Heart right ventricle (tissue), 16 donors: ENCODE measurements at regions of chr12 and their contacts with region 1.

Region 1: GRCh38 chr12:100610666-100611430 is 37.4 kb downstream of the GAS2L3 start:
- DNase-seq: no peak
- ATAC-seq: no peak
- H3K4me3 ChIP-seq: no peak overlapping the region
- H3K27ac ChIP-seq: no peak overlapping the region
- H3K4me1 ChIP-seq: peaks cover 0 to 23% (median 0%) of the 10 kb centered on the region in 9 donors
- H3K27me3 ChIP-seq: no peaks in the 10 kb centered on the region
- CTCF ChIP-seq: no peak

Region 2: DNA sequence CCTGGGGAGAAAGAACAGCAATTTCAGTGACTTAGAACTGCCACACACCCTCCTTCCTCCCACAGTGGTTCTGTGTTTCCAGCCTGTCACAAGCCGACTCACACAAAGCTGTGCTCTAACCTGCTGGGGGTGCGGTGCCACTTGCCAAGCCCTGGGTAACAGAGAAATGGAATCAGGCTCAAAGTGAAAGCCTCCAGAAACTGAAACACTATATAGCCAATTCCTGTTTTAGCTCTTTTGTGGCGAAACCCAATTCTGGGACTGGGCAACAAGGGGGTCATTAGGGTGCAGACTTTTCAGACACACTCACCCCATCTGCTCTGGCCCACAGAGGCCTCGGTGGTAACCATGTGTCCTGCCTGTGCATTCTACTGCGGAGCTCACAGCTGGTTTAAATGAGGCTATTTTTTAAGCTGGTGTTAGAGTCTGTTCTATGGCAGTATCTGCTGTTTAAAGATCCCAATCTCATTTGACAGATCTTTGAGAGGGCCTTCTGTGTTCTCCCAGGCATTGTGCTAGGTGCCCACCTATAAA is 425.4 kb before region 1 on chr12:
- intact Hi-C with region 1: no loop called
- DNase-seq: no peak
- ATAC-seq: peak in 2 of 8 donors; percentile 13 to 27
- H3K4me3 ChIP-seq: peak overlapping the region in 1 of 10 donors; percentile 3
- H3K27ac ChIP-seq: peak overlapping the region in 4 of 10 donors; percentile 16 to 46 (median 34)
- H3K4me1 ChIP-seq: peaks cover 0 to 19% (median 3%) of the 10 kb centered on the region in 9 donors
- H3K27me3 ChIP-seq: no peaks in the 10 kb centered on the region
- CTCF ChIP-seq: no peak

Region 3: GRCh38 chr12:100591975-100592374 is 18.9 kb before region 1 on chr12:
- intact Hi-C with region 1: loop called in 1 of 10 experiments (anchors 2 kb)
- DNase-seq: no peak
- ATAC-seq: no peak
- H3K4me3 ChIP-seq: no peak overlapping the region
- H3K27ac ChIP-seq: no peak overlapping the region
- H3K4me1 ChIP-seq: peaks cover 0 to 12% (median 0%) of the 10 kb centered on the region in 9 donors
- H3K27me3 ChIP-seq: no peaks in the 10 kb centered on the region
- CTCF ChIP-seq: no peak

Region 4: GRCh38 chr12:100688451-100688864 is 77.6 kb after region 1 on chr12:
- intact Hi-C with region 1: no loop called
- DNase-seq: no peak
- ATAC-seq: no peak
- H3K4me3 ChIP-seq: no peak overlapping the region
- H3K27ac ChIP-seq: no peak overlapping the region
- H3K4me1 ChIP-seq: no peaks in the 10 kb centered on the region
- H3K27me3 ChIP-seq: peaks cover 0 to 6% (median 0%) of the 10 kb centered on the region in 7 donors
- CTCF ChIP-seq: no peak